Activated CD4-positive, alpha-beta T cell treated with anti-CD3 and anti-CD28 coated beads for 36 hours (primary cell): ENCODE measurements at regions of chr1 and their contacts with region 1.

Region 1: GRCh38 chr1:92536980-92537884 is 50.5 kb upstream of the GFI1 start:
- DNase-seq: no peak
- ATAC-seq: peak; percentile 53
- H3K4me3 Mint-ChIP-seq: peak overlapping the region; percentile 70
- H3K27ac Mint-ChIP-seq: peak overlapping the region; percentile 98
- H3K4me1 Mint-ChIP-seq: peaks cover 89% of the 10 kb centered on the region
- H3K27me3 Mint-ChIP-seq: no peaks in the 10 kb centered on the region

Region 2: DNA sequence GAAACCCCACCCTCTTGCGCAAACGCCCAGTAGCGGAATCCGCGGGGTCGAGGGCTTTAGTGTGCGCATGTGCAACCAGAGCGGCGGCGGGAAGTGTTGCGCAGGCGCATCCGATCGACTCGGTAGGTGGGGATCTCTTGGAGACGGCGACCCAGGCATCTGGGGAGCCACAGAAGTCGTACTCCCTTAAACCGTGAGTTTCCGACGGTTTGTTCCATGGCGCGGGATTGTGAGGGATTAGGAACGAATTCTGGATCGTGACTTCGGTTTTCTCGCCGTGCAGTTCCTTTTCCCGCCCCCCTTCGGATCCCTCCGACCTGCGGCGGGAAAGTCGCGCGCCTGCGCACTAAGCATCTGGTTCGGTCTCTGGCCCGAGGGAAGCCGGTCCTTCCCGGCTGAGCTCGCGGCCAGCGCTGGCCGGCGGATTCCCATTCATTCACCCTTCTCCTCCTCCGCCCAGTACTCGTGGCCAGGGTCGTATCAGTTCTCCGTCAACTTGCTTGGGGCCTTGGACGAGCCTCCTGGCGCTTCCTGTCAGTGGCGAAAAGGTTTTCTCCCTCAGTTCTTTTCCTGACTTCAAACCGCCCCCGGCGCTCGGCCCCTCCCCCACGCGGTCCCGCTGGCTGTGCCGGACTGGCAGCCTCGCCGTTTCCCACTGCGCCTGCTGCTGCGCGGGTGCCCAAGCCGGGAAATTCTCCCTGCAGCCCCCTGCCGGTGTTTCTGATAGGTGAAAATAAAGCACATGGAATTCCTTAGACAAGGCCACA is 1036.3 kb before region 1 on chr1 and contains the start of gene CDC7:
- CTCF ChIA-PET with region 1: no interaction called
- POLR2A ChIA-PET with region 1: no interaction called
- intact Hi-C with region 1: loop called in 1 of 2 experiments (anchors 5 kb)
- DNase-seq: peak; percentile 93
- ATAC-seq: peak; percentile 88
- H3K4me3 Mint-ChIP-seq: no peak within 1 kb of the TSS
- H3K27ac Mint-ChIP-seq: no peak within 1 kb of the TSS
- H3K4me1 Mint-ChIP-seq: peaks cover 25% of the 10 kb centered on the region
- H3K27me3 Mint-ChIP-seq: no peaks in the 10 kb centered on the region
- total RNA-seq, gene CDC7: 31.1 to 32.0 TPM

Region 3: GRCh38 chr1:91803847-91804545 is 733.2 kb before region 1 on chr1:
- CTCF ChIA-PET with region 1: no interaction called
- POLR2A ChIA-PET with region 1: interaction called, 3 read pairs
- intact Hi-C with region 1: loop called in 1 of 2 experiments (anchors 2 kb)
- DNase-seq: peak; percentile 86
- ATAC-seq: peak; percentile 80
- H3K4me3 Mint-ChIP-seq: peak overlapping the region; percentile 56
- H3K27ac Mint-ChIP-seq: peak overlapping the region; percentile 90
- H3K4me1 Mint-ChIP-seq: peaks cover 39% of the 10 kb centered on the region
- H3K27me3 Mint-ChIP-seq: peaks cover 1% of the 10 kb centered on the region

Region 4: DNA sequence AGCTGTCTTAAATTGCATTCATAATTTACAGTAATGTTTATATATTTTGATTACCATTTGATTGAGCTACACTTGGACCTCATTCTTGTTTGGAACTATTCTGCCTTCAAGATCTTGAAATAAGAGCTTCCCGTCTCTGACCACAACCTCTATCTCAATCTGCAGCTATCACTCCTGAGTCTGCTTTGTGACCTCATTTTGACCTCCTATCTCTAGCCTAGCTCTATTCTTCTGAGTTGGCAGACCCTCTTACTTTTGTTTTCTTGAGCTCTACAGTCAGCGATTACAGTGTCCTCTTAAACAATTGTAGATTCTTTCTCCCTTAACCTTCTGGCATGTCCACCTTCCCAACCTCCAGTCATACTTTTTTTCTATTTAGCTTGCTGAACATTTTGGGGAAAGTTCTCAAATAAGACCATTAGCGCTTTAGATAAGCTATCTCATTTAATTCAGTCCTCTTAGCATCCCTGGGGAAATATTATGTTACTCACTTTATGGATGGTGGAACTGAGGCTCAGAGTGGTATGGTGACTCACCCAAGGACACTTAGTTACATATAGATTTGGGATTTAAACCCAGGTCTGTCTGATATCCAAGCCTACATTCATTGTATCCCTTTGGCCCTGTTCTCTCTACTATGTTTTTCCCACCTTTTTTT is 219.3 kb before region 1 on chr1:
- CTCF ChIA-PET with region 1: interaction called, 4 read pairs
- POLR2A ChIA-PET with region 1: interaction called, 3 read pairs
- intact Hi-C with region 1: loop called in 1 of 2 experiments (anchors 2 kb)
- DNase-seq: no peak
- ATAC-seq: peak; percentile 65
- H3K4me3 Mint-ChIP-seq: no peak overlapping the region
- H3K27ac Mint-ChIP-seq: peak overlapping the region; percentile 52
- H3K4me1 Mint-ChIP-seq: peaks cover 58% of the 10 kb centered on the region
- H3K27me3 Mint-ChIP-seq: no peaks in the 10 kb centered on the region

Region 5: GRCh38 chr1:92485381-92486257 is 51.6 kb before region 1 on chr1:
- CTCF ChIA-PET with region 1: interaction called, 36 read pairs
- POLR2A ChIA-PET with region 1: interaction called, 101 read pairs
- intact Hi-C with region 1: loop called (anchors 1 kb)
- DNase-seq: peak; percentile 95
- ATAC-seq: peak; percentile 58
- H3K4me3 Mint-ChIP-seq: peak overlapping the region; percentile 98
- H3K27ac Mint-ChIP-seq: peak overlapping the region; percentile 97
- H3K4me1 Mint-ChIP-seq: peaks cover 30% of the 10 kb centered on the region
- H3K27me3 Mint-ChIP-seq: no peaks in the 10 kb centered on the region

Region 6: DNA sequence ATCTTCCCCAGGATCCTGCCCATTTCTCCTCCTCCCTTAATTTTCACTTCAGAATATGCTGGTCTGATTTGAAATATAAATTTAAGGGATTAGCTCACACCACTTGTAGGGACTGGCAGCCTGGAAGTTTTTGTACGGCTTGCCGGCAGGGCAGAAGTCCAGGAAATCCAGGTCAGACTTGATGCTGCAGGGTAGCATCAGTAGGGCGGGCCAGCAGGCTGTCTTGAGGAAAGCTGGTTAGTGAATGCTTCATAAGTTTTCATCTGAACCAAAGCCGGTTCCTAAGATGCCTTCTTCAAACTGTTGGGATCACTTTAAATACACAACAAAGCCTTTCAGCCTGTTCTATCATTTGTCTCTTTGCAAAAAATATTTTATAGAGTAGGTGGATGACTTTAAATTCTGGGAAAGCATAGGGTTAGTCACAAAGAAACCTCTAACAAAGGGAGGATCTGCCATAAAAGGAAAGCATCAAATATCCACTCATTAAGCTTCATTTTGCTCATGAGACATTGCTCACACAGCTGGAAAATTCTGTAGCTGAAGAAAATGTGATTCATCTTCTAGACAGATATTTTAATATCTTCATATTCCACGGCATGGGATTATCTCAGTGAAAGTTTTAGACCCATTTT is 40.1 kb after region 1 on chr1:
- CTCF ChIA-PET with region 1: interaction called, 8 read pairs
- POLR2A ChIA-PET with region 1: interaction called, 12 read pairs
- intact Hi-C with region 1: loop called (anchors 1 to 2 kb)
- DNase-seq: peak; percentile 42
- ATAC-seq: peak; percentile 62
- H3K4me3 Mint-ChIP-seq: peak overlapping the region; percentile 88
- H3K27ac Mint-ChIP-seq: peak overlapping the region; percentile 89
- H3K4me1 Mint-ChIP-seq: peaks cover 61% of the 10 kb centered on the region
- H3K27me3 Mint-ChIP-seq: no peaks in the 10 kb centered on the region